ENCODE measurements at regions of chr16 and their contacts with region 1.

Region 1: DNA sequence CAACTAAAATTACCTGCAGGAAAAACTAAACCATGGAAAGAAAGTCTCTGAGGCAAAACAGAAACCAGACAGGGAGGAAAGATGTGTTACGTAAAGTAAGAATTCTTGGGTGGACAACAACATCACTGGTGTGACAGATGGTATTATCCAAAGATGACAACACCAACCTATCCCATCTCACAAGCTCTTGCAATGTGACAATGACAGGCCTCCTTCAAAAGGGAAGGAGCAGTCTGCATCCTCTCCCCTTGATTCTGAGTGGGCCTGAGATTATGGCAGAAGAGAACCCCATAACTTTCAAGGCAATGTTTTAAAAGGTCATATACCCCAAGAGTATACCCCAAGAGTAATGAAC is 17.6 kb upstream of the KDM8 start:
- DNase-seq: no peak
- H3K4me3 ChIP-seq: no peak overlapping the region
- H3K27ac ChIP-seq: no peak overlapping the region
- H3K4me1 ChIP-seq: no peaks in the 10 kb centered on the region
- H3K27me3 ChIP-seq: no peaks in the 10 kb centered on the region
- CTCF ChIP-seq: no peak
- POLR2A ChIP-seq: no peak

Region 2: DNA sequence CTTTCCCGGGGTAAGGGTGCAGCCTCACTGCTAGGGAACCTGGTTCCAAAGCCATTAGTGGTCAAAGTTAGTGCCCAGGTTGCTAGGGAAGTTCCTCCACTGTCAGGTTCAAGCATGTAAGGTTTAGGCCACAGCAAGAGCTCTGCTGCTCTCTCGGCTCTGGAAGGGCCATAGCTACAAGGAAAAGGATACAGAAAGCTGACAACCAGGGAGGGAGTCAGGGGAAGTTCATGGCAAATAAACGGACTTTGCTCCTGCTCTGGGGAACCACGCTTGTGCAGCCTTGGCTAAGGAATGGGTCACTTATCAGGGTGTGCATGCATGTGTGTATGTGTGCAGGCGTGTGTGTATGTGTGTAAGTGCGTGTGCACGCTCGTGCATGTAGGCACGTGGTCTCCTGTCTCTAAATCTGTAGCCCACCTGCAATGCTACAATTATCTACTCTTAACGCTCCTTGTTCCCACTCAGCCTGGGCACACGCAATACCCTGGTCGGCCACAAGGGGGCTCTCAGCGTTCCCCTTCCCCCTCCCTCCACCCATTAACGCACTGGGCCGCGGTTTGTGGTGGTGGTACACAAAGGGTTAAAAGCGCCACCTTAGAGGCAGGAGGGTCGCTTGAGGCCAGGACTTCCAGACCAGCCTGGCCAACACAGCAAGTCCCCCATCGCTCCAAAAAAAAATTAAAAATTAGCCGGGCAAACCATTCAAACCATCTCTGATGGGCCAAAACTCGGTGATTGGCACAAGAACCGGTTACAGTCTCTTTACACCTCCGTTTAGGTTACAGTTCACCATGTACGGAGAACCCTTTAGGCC is 30.8 kb before region 1 on chr16:
- intact Hi-C with region 1: loop called (anchors 1 kb)
- DNase-seq: no peak
- H3K4me3 ChIP-seq: no peak overlapping the region
- H3K27ac ChIP-seq: no peak overlapping the region
- H3K4me1 ChIP-seq: no peaks in the 10 kb centered on the region
- H3K27me3 ChIP-seq: no peaks in the 10 kb centered on the region
- CTCF ChIP-seq: peak; percentile 76 to 97 (median 87)
- POLR2A ChIP-seq: no peak

Region 3: DNA sequence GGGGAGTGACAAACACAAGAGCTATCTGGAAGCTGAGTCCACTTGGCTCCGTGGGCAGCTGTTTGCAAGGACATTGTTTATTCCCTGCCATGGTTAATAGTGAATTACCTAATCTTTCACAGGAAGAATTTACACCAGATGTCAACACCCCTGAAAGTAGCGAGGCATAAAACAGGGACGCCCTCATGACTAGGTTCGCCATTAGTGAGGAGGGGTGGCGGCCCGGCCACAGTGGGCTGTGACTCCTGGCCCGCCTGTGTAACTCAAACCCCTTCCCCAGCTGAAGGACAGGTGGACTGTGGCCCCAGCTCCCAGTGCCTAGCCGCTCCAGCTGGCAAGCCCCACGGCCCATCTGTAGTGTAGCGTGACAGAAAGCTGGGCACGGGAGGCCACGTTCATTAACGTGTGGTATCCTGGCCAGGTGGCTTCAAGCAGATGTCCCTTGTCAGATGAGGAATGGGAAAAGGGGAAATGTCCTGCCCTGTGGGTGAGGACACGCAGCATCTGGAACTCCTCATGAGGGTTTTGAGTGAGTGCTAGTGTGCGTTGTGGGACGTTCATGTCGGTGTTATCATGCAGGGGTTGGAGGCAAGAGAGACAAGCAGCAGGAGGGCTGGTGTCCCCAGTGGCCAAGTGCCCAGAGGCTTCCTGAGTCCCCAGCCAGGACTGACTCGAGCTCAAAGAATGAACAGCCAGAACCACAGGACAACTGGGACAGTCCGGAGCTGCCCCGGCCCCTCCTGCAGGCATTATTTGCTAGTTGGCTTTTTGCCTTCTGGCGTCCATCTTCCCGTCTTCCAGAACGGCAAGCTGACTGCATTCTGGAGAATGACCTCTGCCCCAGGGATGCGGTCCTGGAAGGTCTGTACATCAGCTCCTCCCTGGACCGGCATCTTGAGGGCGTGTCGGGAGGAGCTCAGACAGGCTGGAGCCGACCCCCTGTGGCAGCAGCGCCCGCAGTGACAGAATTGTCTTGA is 36.8 kb after region 1 on chr16:
- intact Hi-C with region 1: no loop called
- DNase-seq: no peak
- H3K4me3 ChIP-seq: no peak overlapping the region
- H3K27ac ChIP-seq: peak overlapping the region; percentile 58
- H3K4me1 ChIP-seq: peaks cover 17% of the 10 kb centered on the region
- H3K27me3 ChIP-seq: no peaks in the 10 kb centered on the region
- CTCF ChIP-seq: no peak
- POLR2A ChIP-seq: no peak